ENCODE measurements at regions of chr17 and their contacts with region 1.

Region 1: GRCh38 chr17:76623271-76624146 is 20.0 kb downstream of the ST6GALNAC1 start:
- DNase-seq: peak; percentile 23
- H3K4me3 ChIP-seq: no peak overlapping the region
- H3K27ac ChIP-seq: peak overlapping the region; percentile 34
- H3K27me3 ChIP-seq: peaks cover 13% of the 10 kb centered on the region
- CTCF ChIP-seq: peak; percentile 94

Region 2: GRCh38 chr17:76384222-76384986 is 239.1 kb before region 1 on chr17 and contains the start of gene SPHK1:
- CTCF ChIA-PET with region 1: no interaction called
- POLR2A ChIA-PET with region 1: no interaction called
- DNase-seq: no peak
- H3K4me3 ChIP-seq: peak within 1 kb of the TSS; percentile 74
- H3K27ac ChIP-seq: peak within 1 kb of the TSS; percentile 87
- H3K27me3 ChIP-seq: no peaks in the 10 kb centered on the region
- CTCF ChIP-seq: no peak
- polyA plus RNA-seq, gene SPHK1: 11.6 and 16.2 TPM in 2 replicates

Region 3: DNA sequence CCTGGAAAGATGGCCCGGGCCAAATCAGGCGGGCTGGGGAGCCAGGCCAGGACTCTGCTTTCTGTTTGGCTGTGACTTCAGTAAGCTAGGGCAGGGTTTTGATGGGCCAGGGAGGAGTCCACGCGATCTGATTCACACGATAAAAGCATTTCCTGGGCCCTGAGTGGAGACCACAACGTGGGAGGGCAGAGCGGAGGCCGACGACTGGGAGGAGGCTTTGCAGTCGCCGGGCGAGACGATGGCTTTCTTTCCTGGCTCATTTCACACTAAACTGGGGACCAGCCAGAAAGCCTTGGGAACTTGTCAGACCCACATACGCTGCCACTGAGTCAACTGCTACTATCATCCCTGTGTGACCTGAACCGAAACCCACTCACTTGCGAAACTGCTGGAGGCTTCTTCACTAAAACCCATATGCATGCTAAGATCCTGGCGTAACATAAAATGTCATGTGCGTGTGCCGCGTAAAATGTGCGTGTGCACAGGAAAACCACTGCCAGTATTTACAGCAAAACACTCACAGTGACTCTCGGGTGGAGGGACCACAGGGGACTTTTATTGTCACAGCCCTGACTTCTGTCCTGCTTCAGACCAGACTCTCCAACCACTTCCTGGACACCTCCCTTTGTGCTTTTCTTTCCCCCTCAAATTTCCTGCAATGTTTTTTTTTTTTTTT is 108.1 kb before region 1 on chr17:
- CTCF ChIA-PET with region 1: interaction called, 28 read pairs
- POLR2A ChIA-PET with region 1: no interaction called
- DNase-seq: peak; percentile 65
- H3K4me3 ChIP-seq: peak overlapping the region; percentile 29
- H3K27ac ChIP-seq: peak overlapping the region; percentile 91
- H3K27me3 ChIP-seq: no peaks in the 10 kb centered on the region
- CTCF ChIP-seq: no peak

Region 4: DNA sequence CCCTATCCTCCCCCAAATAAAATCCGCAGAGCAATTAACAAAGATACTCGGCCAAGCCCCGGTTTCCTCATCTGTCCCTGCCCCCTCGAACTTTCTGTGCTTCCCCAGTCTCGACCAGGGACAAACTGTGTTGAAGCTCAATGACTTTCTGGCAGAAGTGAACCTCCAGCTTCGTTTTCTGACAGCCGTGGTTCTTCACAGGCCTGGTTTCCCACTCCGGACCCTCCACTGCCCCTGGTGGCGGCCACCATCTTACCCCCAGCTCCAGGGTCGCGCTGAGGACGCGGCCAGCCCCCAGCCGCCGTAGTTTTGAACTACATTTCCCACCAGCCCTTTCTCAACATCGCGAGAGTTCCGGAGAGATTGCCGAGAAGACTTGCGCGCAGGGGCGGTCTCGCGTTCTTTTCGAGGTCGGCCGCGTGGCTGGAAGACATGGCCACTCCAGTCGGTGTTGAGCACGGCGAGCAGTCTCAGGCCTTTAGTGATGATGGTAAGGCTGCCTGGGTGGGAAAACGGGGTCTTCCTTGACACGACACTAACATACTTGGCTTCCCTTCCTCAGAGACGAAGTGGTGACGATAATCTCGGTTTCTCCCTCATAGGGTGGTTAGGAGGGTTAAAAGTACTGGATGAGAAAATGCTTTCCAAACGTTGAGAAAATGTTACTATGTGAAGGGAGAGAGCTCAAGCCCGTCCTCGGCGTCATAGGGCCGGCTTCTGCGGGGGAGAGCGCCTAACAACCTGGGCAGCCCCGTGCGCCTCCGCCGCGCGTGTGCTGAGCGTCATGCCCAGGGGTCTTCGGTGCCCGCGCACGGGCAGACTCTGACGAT is 65.9 kb before region 1 on chr17:
- CTCF ChIA-PET with region 1: interaction called, 16 read pairs
- POLR2A ChIA-PET with region 1: interaction called, 4 read pairs
- DNase-seq: peak; percentile 91
- H3K4me3 ChIP-seq: peak overlapping the region; percentile 95
- H3K27ac ChIP-seq: peak overlapping the region; percentile 68
- H3K27me3 ChIP-seq: no peaks in the 10 kb centered on the region
- CTCF ChIP-seq: peak; percentile 70

Region 5: GRCh38 chr17:76585818-76586593 is 37.5 kb before region 1 on chr17 and contains the start of gene ST6GALNAC2:
- CTCF ChIA-PET with region 1: interaction called, 12 read pairs
- POLR2A ChIA-PET with region 1: interaction called, 3 read pairs
- DNase-seq: no peak
- H3K4me3 ChIP-seq: peak within 1 kb of the TSS; percentile 55
- H3K27ac ChIP-seq: no peak within 1 kb of the TSS
- H3K27me3 ChIP-seq: peaks cover 34% of the 10 kb centered on the region
- CTCF ChIP-seq: peak; percentile 25
- polyA plus RNA-seq, gene ST6GALNAC2: 0.17 and 0.36 TPM in 2 replicates

Region 6: GRCh38 chr17:76611749-76612512 is 11.6 kb before region 1 on chr17:
- CTCF ChIA-PET with region 1: interaction called, 12 read pairs
- POLR2A ChIA-PET with region 1: no interaction called
- DNase-seq: no peak
- H3K4me3 ChIP-seq: no peak overlapping the region
- H3K27ac ChIP-seq: no peak overlapping the region
- H3K27me3 ChIP-seq: no peaks in the 10 kb centered on the region
- CTCF ChIP-seq: no peak

Region 7: GRCh38 chr17:76658001-76658662 is 34.6 kb after region 1 on chr17:
- CTCF ChIA-PET with region 1: interaction called, 10 read pairs
- POLR2A ChIA-PET with region 1: no interaction called
- DNase-seq: no peak
- H3K4me3 ChIP-seq: no peak overlapping the region
- H3K27ac ChIP-seq: no peak overlapping the region
- H3K27me3 ChIP-seq: peaks cover 9% of the 10 kb centered on the region
- CTCF ChIP-seq: no peak